Caco-2 (cell line): ENCODE measurements at regions of chr17 and their contacts with region 1.

Region 1: DNA sequence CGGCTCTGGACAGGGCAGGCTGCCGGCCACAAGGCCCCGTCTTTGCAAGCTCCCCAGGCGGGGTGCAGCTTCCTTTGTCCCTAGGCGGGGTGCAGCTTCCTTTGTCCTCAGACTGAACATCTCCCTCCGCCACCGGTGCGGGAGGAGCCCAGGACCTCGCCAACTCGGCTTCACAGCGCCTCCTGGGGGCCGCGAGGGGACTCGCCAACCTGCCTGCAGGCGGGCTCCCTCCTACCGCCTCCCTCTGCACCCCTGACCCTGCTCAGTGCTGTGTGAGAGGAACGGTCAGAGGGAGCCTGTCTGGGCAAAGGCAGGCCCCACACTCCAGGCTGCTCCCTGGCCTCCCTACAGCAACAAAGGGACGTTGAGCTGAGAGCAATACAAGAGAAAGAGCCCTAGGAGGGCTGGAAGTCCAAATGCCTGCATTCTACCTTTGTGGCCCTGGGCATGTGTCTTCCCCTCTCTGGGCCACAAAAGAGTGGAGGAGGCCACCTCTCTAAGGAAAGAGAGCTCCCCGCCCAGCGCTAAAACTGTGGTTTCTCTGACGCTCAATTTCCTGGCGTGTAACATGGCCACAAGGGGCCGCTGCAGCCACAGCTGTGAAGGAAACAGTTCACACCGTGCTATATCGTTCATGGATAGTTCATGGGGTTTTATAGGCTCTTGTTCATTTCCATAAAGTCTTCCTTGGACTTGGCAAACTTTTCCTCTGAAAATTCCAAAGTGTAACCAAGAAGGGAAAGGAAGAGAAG is 20.9 kb upstream of the KRT19 start:
- DNase-seq: peak; percentile 85 to 87
- H3K4me3 ChIP-seq: no peak overlapping the region
- H3K4me3 Mint-ChIP-seq: peak overlapping the region; percentile 5
- H3K27ac Mint-ChIP-seq: peak overlapping the region; percentile 77
- H3K4me1 ChIP-seq: peaks cover 46% of the 10 kb centered on the region
- H3K4me1 Mint-ChIP-seq: peaks cover 49% of the 10 kb centered on the region
- H3K27me3 ChIP-seq: no peaks in the 10 kb centered on the region
- H3K27me3 Mint-ChIP-seq: no peaks in the 10 kb centered on the region
- CTCF ChIP-seq: peak; percentile 90 to 94

Region 2: GRCh38 chr17:41406205-41406604 is 142.8 kb before region 1 on chr17:
- CTCF ChIA-PET with region 1: interaction called, 12 read pairs
- POLR2A ChIA-PET with region 1: no interaction called
- intact Hi-C with region 1: no loop called
- DNase-seq: peak; percentile 48 to 66
- H3K4me3 ChIP-seq: no peak overlapping the region
- H3K4me3 Mint-ChIP-seq: no peak overlapping the region
- H3K27ac Mint-ChIP-seq: no peak overlapping the region
- H3K4me1 ChIP-seq: peaks cover 7% of the 10 kb centered on the region; the same call in 1 of the 2 replicates
- H3K4me1 Mint-ChIP-seq: peaks cover 9% of the 10 kb centered on the region
- H3K27me3 ChIP-seq: no peaks in the 10 kb centered on the region
- H3K27me3 Mint-ChIP-seq: no peaks in the 10 kb centered on the region
- CTCF ChIP-seq: peak; percentile 14 to 46

Region 3: GRCh38 chr17:41417576-41418015 is 131.4 kb before region 1 on chr17:
- CTCF ChIA-PET with region 1: interaction called, 10 read pairs
- POLR2A ChIA-PET with region 1: no interaction called
- intact Hi-C with region 1: no loop called
- DNase-seq: peak; percentile 63 to 65
- H3K4me3 ChIP-seq: no peak overlapping the region
- H3K4me3 Mint-ChIP-seq: no peak overlapping the region
- H3K27ac Mint-ChIP-seq: peak overlapping the region; percentile 5
- H3K4me1 ChIP-seq: peaks cover 60% of the 10 kb centered on the region
- H3K4me1 Mint-ChIP-seq: peaks cover 70% of the 10 kb centered on the region
- H3K27me3 ChIP-seq: no peaks in the 10 kb centered on the region
- H3K27me3 Mint-ChIP-seq: no peaks in the 10 kb centered on the region
- CTCF ChIP-seq: peak; percentile 70 to 71

Region 4: DNA sequence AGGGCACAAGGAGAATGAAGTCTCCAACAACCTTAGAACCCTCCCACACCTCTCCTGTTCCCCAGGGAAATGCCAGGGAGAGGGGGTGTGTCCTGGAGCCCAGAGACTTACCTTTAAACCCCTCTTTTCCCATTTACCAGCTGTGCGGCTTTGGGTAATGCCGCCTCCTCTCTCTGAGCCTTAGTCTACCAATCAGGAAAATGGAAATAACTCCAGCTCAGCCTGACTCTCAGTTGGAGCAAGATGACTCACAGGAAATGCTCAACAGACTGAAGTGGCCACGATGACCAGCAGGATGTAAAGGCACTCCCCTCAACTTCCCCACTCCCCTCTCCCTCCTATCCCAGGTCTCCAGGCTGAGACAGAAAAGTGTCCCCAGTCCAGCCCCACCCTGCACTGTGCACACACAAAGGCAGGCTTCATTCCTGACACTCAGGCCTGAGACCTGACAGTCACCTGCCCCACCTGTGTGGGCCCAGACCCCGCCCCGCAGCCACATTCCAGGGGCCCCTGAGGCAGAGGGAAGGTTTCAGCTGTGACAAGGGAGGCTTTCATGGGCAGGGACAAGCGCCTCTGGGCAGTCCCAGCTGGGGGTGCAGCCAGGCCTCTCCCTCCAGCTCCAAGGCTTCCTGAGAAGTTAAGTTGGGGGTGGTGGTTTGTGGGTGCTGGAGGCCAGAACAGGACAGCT is 27.3 kb before region 1 on chr17:
- CTCF ChIA-PET with region 1: interaction called, 27 read pairs
- POLR2A ChIA-PET with region 1: interaction called, 10 read pairs
- intact Hi-C with region 1: loop called (anchors 1 kb)
- DNase-seq: peak; percentile 97 to 99
- H3K4me3 ChIP-seq: no peak overlapping the region
- H3K4me3 Mint-ChIP-seq: peak overlapping the region; percentile 68
- H3K27ac Mint-ChIP-seq: peak overlapping the region; percentile 97
- H3K4me1 ChIP-seq: peaks cover 66% of the 10 kb centered on the region
- H3K4me1 Mint-ChIP-seq: peaks cover 51% of the 10 kb centered on the region
- H3K27me3 ChIP-seq: no peaks in the 10 kb centered on the region
- H3K27me3 Mint-ChIP-seq: no peaks in the 10 kb centered on the region
- CTCF ChIP-seq: no peak

Region 5: DNA sequence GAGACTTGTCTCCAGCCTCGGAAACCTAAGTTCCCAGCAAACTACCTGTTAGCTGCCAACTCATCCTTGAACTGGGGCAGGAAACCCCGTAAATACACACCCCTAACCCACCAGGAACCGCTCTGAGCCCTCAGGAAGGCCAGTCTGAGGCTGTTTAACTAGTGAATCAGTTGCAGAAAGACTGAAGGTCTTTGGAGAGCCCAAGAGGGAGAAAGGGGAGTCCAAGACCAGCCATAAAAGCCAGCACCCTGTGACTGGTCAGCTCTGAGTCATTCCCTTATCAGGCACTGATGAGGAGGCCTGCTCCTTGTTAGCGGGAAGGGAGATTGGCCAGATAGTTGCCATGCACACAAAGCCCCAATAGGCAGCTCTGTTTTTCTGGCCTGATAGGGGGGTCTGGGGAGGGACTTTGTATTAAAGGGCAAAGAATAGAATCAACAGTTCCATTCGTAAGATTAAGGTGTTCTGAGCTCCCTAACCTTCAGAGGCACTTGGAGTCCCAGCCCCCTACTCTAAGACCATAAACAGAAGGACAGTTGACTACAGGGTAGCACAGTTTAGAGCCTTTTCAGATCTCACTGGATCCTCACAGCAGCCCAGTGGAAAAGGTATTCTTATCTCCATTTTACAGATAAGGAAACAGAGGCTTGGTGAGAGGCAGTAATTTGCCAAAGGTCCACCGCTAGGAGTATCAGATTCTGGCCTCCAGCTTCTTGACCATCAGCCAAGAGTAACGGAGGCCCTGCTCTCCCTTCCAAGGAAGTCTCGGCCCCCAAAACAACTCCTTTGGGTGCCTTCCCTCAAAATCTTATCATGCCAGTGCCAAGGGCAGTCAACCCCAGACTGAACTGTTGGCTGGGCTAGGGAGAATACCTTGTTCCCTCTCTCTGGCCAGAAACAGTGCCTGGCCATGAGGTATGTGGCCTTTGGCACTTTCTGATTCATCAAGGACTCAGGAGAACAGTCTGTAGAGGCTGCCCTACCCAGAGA is 18.7 kb before region 1 on chr17:
- CTCF ChIA-PET with region 1: interaction called, 42 read pairs
- POLR2A ChIA-PET with region 1: interaction called, 31 read pairs
- intact Hi-C with region 1: loop called (anchors 1 kb)
- DNase-seq: peak; percentile 89 to 97
- H3K4me3 ChIP-seq: peak overlapping the region; percentile 4
- H3K4me3 Mint-ChIP-seq: peak overlapping the region; percentile 99
- H3K27ac Mint-ChIP-seq: peak overlapping the region; percentile 98
- H3K4me1 ChIP-seq: peaks cover 46% of the 10 kb centered on the region
- H3K4me1 Mint-ChIP-seq: peaks cover 54% of the 10 kb centered on the region
- H3K27me3 ChIP-seq: no peaks in the 10 kb centered on the region
- H3K27me3 Mint-ChIP-seq: no peaks in the 10 kb centered on the region
- CTCF ChIP-seq: no peak

Region 6: GRCh38 chr17:41538565-41538991 is 10.4 kb before region 1 on chr17:
- CTCF ChIA-PET with region 1: interaction called, 13 read pairs
- POLR2A ChIA-PET with region 1: interaction called, 6 read pairs
- intact Hi-C with region 1: loop called (anchors 1 kb)
- DNase-seq: peak in 1 of 2 experiments; percentile 38
- H3K4me3 ChIP-seq: no peak overlapping the region
- H3K4me3 Mint-ChIP-seq: no peak overlapping the region
- H3K27ac Mint-ChIP-seq: peak overlapping the region; percentile 83
- H3K4me1 ChIP-seq: peaks cover 86% of the 10 kb centered on the region
- H3K4me1 Mint-ChIP-seq: peaks cover 76% of the 10 kb centered on the region
- H3K27me3 ChIP-seq: no peaks in the 10 kb centered on the region
- H3K27me3 Mint-ChIP-seq: no peaks in the 10 kb centered on the region
- CTCF ChIP-seq: no peak

Region 7: DNA sequence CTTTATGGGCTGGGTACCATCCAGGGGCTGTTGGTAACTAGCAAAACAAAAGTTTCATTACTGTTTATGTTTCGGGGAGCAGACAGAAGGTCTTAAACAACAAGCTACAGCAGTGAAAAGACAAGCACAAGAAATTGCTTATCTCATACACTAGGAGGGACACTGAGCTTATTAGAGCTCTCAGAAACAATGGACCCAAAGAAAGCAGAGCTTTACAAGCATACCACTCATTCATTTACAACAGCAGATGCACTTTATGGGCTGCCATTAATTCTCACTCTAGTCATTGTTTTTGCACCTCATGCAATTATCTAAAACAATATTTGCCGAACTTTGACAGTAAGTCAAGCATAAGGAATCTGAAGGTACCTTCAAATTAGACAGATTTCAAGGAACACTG is 53.5 kb after region 1 on chr17:
- CTCF ChIA-PET with region 1: no interaction called
- POLR2A ChIA-PET with region 1: no interaction called
- intact Hi-C with region 1: no loop called
- DNase-seq: no peak
- H3K4me3 ChIP-seq: no peak overlapping the region
- H3K4me3 Mint-ChIP-seq: no peak overlapping the region
- H3K27ac Mint-ChIP-seq: no peak overlapping the region
- H3K4me1 ChIP-seq: no peaks in the 10 kb centered on the region
- H3K4me1 Mint-ChIP-seq: peaks cover 8% of the 10 kb centered on the region
- H3K27me3 ChIP-seq: no peaks in the 10 kb centered on the region
- H3K27me3 Mint-ChIP-seq: peaks cover 3% of the 10 kb centered on the region
- CTCF ChIP-seq: no peak

Region 8: DNA sequence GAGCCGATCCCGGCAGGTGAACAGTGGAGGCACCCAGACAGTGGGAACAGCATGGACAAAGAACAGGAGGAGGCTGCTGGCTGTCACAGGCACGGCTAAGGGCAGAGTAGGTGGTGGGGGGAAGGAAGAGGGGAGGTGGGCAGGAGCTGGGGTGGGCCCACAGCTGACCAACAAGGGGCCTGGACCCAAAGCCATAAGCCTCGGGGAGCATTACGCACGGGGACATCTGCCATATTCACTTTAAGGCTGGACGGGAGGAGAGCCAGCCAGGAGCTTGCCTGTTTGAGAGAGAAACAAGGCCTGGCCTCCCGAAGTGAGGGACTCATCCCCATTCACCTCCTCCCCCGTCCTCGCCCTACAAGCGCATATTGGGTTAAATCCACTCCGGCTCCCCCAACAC is 205.0 kb after region 1 on chr17:
- CTCF ChIA-PET with region 1: no interaction called
- POLR2A ChIA-PET with region 1: no interaction called
- intact Hi-C with region 1: no loop called
- DNase-seq: no peak
- H3K4me3 ChIP-seq: no peak overlapping the region
- H3K4me3 Mint-ChIP-seq: no peak overlapping the region
- H3K27ac Mint-ChIP-seq: no peak overlapping the region
- H3K4me1 ChIP-seq: no peaks in the 10 kb centered on the region
- H3K4me1 Mint-ChIP-seq: no peaks in the 10 kb centered on the region
- H3K27me3 ChIP-seq: no peaks in the 10 kb centered on the region
- H3K27me3 Mint-ChIP-seq: no peaks in the 10 kb centered on the region
- CTCF ChIP-seq: no peak